ENCODE measurements at regions of chr6 and their contacts with region 1.

Region 1: GRCh38 chr6:163956571-163957407 is 542.3 kb downstream of the QKI start:
- DNase-seq: peak; percentile 65 to 78 (median 72)
- ATAC-seq: peak; percentile 93 to 99 (median 97)
- H3K4me3 ChIP-seq: no peak overlapping the region
- H3K27ac ChIP-seq: no peak overlapping the region
- H3K4me1 ChIP-seq: no peaks in the 10 kb centered on the region
- H3K27me3 ChIP-seq: no peaks in the 10 kb centered on the region
- CTCF ChIP-seq: peak; percentile 61 to 81 (median 76)

Region 2: GRCh38 chr6:162856885-162857284 is 1099.9 kb before region 1 on chr6:
- intact Hi-C with region 1: loop called in 1 of 3 experiments (anchors 10 kb)
- DNase-seq: peak in 3 of 6 donors; percentile 36 to 50 (median 49)
- ATAC-seq: peak; percentile 90 to 95 (median 94)
- H3K4me3 ChIP-seq: peak overlapping the region in 1 of 4 donors; percentile 26
- H3K27ac ChIP-seq: peak overlapping the region in 2 of 4 donors; percentile 40 to 42
- H3K4me1 ChIP-seq: peaks cover 0 to 15% (median 10%) of the 10 kb centered on the region in 3 donors
- H3K27me3 ChIP-seq: no peaks in the 10 kb centered on the region
- CTCF ChIP-seq: peak in 3 of 4 donors; percentile 30 to 37 (median 37)

Region 3: GRCh38 chr6:163180874-163181541 is 775.8 kb before region 1 on chr6:
- intact Hi-C with region 1: loop called in 1 of 3 experiments (anchors 10 kb)
- DNase-seq: peak in 5 of 6 donors; percentile 52 to 81 (median 65)
- ATAC-seq: peak; percentile 94 to 99 (median 98)
- H3K4me3 ChIP-seq: no peak overlapping the region
- H3K27ac ChIP-seq: no peak overlapping the region
- H3K4me1 ChIP-seq: peaks cover 0 to 4% (median 3%) of the 10 kb centered on the region in 3 donors
- H3K27me3 ChIP-seq: no peaks in the 10 kb centered on the region
- CTCF ChIP-seq: peak in 3 of 4 donors; percentile 50 to 63 (median 59)

Region 4: GRCh38 chr6:163427498-163428254 is 529.1 kb before region 1 on chr6:
- intact Hi-C with region 1: loop called in 1 of 3 experiments (anchors 10 kb)
- DNase-seq: no peak
- ATAC-seq: peak; percentile 58 to 84 (median 78)
- H3K4me3 ChIP-seq: no peak overlapping the region
- H3K27ac ChIP-seq: no peak overlapping the region
- H3K4me1 ChIP-seq: peaks cover 17 to 40% (median 39%) of the 10 kb centered on the region in 3 donors
- H3K27me3 ChIP-seq: no peaks in the 10 kb centered on the region
- CTCF ChIP-seq: peak in 3 of 4 donors; percentile 9 to 18 (median 13)

Region 5: GRCh38 chr6:163872335-163872734 is 84.5 kb before region 1 on chr6:
- intact Hi-C with region 1: no loop called
- DNase-seq: no peak
- ATAC-seq: no peak
- H3K4me3 ChIP-seq: no peak overlapping the region
- H3K27ac ChIP-seq: no peak overlapping the region
- H3K4me1 ChIP-seq: no peaks in the 10 kb centered on the region
- H3K27me3 ChIP-seq: no peaks in the 10 kb centered on the region
- CTCF ChIP-seq: no peak

Measured in pancreas (tissue), 10 donors.